Natural killer cell (primary cell): ENCODE measurements at regions of chr16 and their contacts with region 1.

Region 1: GRCh38 chr16:11535471-11535870 is 51.2 kb downstream of the LITAF start:
- DNase-seq: no peak
- ATAC-seq: no peak
- H3K4me3 ChIP-seq: no peak overlapping the region
- H3K4me3 Mint-ChIP-seq: peak overlapping the region; percentile 50
- H3K27ac ChIP-seq: no peak overlapping the region
- H3K27ac Mint-ChIP-seq: peak overlapping the region in 1 of 2 donors; percentile 45
- H3K4me1 ChIP-seq: peaks cover 43% of the 10 kb centered on the region
- H3K4me1 Mint-ChIP-seq: peaks cover 45 to 46% of the 10 kb centered on the region in 2 donors
- H3K27me3 ChIP-seq: no peaks in the 10 kb centered on the region
- H3K27me3 Mint-ChIP-seq: peaks cover 8% of the 10 kb centered on the region in 2 donors
- CTCF ChIP-seq: no peak

Region 2: GRCh38 chr16:11613381-11614303 is 78.2 kb after region 1 on chr16:
- intact Hi-C with region 1: no loop called
- DNase-seq: peak; percentile 52 to 64
- ATAC-seq: peak; percentile 81 to 83 (median 82)
- H3K4me3 ChIP-seq: no peak overlapping the region
- H3K4me3 Mint-ChIP-seq: peak overlapping the region; percentile 81
- H3K27ac ChIP-seq: peak overlapping the region; percentile 73
- H3K27ac Mint-ChIP-seq: peak overlapping the region; percentile 95 to 96
- H3K4me1 ChIP-seq: peaks cover 48% of the 10 kb centered on the region
- H3K4me1 Mint-ChIP-seq: peaks cover 37 to 60% of the 10 kb centered on the region in 2 donors
- H3K27me3 ChIP-seq: no peaks in the 10 kb centered on the region
- H3K27me3 Mint-ChIP-seq: no peaks in the 10 kb centered on the region
- CTCF ChIP-seq: no peak

Region 3: DNA sequence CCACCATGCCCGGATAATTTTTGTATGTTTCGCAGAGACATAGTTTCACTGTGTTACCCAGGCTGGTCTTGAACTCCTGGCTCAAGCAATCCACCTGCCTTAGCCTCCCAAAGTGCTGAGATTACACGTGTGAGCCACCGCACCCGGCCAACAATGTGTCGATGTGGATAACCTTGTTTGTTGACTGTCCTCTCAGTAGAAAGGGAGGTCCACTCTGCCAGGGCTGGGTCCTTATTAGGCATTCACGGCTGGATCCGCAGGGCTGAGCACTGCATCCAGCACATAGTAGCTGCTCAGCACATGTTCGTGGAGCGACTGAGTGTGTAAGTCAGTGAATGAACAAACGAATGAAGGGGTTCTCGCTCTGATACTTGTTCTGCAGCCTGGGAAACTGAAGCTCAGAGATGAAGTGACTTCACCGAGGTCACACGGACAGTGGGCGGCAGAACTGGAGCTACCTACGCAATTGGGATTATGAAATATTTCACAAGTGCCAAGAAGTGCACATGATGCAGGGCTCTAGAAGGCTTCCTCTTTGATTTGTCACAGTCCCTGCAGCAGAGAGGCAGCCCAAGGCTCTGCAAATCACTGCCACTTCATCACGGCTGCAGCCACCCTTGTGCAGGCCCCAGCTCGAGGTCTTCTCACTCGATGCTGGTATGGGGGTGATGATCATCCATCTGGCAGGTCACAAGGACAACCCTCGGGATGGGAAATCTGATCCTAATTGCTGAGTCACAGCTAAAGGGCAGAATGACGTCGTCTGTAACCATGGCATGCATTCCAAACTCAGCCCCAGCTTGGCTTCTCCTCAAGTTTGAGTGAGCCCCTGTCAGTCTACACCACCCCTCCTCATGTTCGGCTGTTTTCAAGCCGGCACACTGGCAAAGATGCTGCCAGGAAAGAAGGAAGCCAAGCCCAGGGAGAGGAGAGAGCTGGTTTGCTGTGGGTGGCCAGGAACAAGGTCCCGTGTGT is 104.7 kb after region 1 on chr16:
- intact Hi-C with region 1: loop called (anchors 1 kb)
- DNase-seq: peak; percentile 28 to 39
- ATAC-seq: peak; percentile 72 to 92 (median 88)
- H3K4me3 ChIP-seq: no peak overlapping the region
- H3K4me3 Mint-ChIP-seq: no peak overlapping the region
- H3K27ac ChIP-seq: peak overlapping the region; percentile 66
- H3K27ac Mint-ChIP-seq: peak overlapping the region; percentile 11 to 33
- H3K4me1 ChIP-seq: peaks cover 24% of the 10 kb centered on the region
- H3K4me1 Mint-ChIP-seq: peaks cover 23 to 32% of the 10 kb centered on the region in 2 donors
- H3K27me3 ChIP-seq: no peaks in the 10 kb centered on the region
- H3K27me3 Mint-ChIP-seq: peaks cover 0 to 11% of the 10 kb centered on the region in 2 donors
- CTCF ChIP-seq: no peak